ENCODE measurements at regions of chr16 and their contacts with region 1.

Region 1: GRCh38 chr16:8958344-8959167 is 5.2 kb downstream of the USP7 start:
- DNase-seq: no peak
- H3K4me3 ChIP-seq: no peak overlapping the region
- H3K27ac ChIP-seq: no peak overlapping the region
- H3K4me1 ChIP-seq: peaks cover 38% of the 10 kb centered on the region
- H3K27me3 ChIP-seq: no peaks in the 10 kb centered on the region
- CTCF ChIP-seq: no peak

Region 2: DNA sequence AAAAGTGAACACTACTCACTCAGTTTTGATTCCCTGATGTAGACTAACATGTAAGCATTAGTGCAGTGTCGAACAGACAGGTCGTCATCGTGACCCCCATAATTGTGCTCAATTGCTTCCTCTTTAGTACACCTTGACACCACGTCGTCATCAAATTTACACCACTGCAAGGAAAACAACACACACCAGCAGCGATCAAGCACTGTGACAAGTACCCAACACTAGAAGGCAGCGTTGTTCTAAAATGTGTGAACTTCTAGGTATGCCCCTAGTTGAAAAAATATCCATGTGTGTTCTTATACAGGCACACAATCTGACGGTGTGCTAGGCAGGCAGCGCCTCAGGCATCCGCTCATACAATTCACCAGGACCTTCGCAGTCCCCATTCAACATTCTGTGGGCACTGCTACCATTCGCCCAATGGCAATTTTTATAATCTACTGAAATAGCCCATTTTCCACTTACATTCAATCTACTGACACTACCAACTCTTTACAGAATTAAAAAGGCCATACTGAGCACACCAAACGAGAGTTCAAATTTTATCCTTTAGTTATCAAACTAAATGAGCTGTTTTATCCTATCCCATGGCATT is 53.3 kb before region 1 on chr16:
- CTCF ChIA-PET with region 1: interaction called, 10 read pairs
- POLR2A ChIA-PET with region 1: no interaction called
- intact Hi-C with region 1: loop called (anchors 5 kb)
- DNase-seq: peak; percentile 17 to 48
- H3K4me3 ChIP-seq: no peak overlapping the region
- H3K27ac ChIP-seq: no peak overlapping the region
- H3K4me1 ChIP-seq: peaks cover 15% of the 10 kb centered on the region
- H3K27me3 ChIP-seq: no peaks in the 10 kb centered on the region
- CTCF ChIP-seq: peak; percentile 59

Region 3: DNA sequence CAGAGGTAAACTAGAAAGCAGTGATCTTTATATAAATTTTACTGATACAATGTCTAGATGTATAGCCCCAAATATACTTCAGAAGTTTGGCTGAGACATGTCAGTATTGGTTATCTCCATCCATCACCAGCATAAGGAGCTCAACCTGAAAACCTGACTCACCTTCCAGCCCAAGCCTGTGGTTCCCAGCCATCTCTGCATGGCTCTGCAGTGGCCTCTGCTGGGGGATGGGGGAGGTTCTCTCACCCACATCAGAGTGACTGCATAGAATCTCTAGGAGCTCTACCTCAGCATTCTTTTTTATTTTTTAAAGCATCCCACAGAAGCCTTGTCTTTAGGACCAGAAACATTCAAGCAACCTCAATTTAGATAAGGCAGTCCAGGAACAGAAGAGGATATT is 22.1 kb before region 1 on chr16:
- CTCF ChIA-PET with region 1: no interaction called
- POLR2A ChIA-PET with region 1: no interaction called
- intact Hi-C with region 1: loop called (anchors 1 kb)
- DNase-seq: peak; percentile 59 to 65
- H3K4me3 ChIP-seq: no peak overlapping the region
- H3K27ac ChIP-seq: peak overlapping the region; percentile 24; the same call in 1 of the 2 replicates
- H3K4me1 ChIP-seq: peaks cover 26% of the 10 kb centered on the region
- H3K27me3 ChIP-seq: no peaks in the 10 kb centered on the region
- CTCF ChIP-seq: peak; percentile 72

Region 4: GRCh38 chr16:8989099-8989878 is 30.7 kb after region 1 on chr16:
- CTCF ChIA-PET with region 1: no interaction called
- POLR2A ChIA-PET with region 1: no interaction called
- intact Hi-C with region 1: no loop called
- DNase-seq: no peak
- H3K4me3 ChIP-seq: no peak overlapping the region
- H3K27ac ChIP-seq: no peak overlapping the region
- H3K4me1 ChIP-seq: peaks cover 8% of the 10 kb centered on the region
- H3K27me3 ChIP-seq: no peaks in the 10 kb centered on the region
- CTCF ChIP-seq: no peak

Region 5: GRCh38 chr16:9112166-9112843 is 153.7 kb after region 1 on chr16:
- CTCF ChIA-PET with region 1: no interaction called
- POLR2A ChIA-PET with region 1: no interaction called
- intact Hi-C with region 1: loop called (anchors 5 kb)
- DNase-seq: no peak
- H3K4me3 ChIP-seq: no peak overlapping the region
- H3K27ac ChIP-seq: peak overlapping the region; percentile 89
- H3K4me1 ChIP-seq: peaks cover 78% of the 10 kb centered on the region
- H3K27me3 ChIP-seq: no peaks in the 10 kb centered on the region
- CTCF ChIP-seq: no peak